ENCODE measurements at regions of chr4 and their contacts with region 1.

Region 1: DNA sequence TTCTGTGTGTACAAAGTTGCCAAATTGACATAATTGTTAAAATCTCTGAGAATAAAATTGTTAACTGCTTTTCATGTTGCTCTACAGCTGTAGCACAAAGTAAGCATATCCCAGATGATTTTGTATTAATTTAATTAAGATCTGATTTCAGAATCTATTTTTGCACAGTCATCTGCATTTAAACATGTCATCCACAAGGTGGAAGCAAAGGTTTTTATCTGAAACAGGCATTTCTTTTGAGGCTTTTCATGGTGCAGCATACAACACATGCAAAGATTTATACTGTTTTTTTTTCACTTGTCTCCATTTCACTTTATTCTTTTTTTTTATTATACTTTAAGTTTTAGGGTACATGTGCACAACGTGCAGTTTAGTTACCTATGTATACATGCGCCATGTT is 51.2 kb downstream of the GC start:
- DNase-seq: no peak
- H3K4me3 Mint-ChIP-seq: no peak overlapping the region
- H3K27ac Mint-ChIP-seq: no peak overlapping the region
- H3K4me1 Mint-ChIP-seq: no peaks in the 10 kb centered on the region
- H3K27me3 Mint-ChIP-seq: peaks cover 9% of the 10 kb centered on the region

Region 2: DNA sequence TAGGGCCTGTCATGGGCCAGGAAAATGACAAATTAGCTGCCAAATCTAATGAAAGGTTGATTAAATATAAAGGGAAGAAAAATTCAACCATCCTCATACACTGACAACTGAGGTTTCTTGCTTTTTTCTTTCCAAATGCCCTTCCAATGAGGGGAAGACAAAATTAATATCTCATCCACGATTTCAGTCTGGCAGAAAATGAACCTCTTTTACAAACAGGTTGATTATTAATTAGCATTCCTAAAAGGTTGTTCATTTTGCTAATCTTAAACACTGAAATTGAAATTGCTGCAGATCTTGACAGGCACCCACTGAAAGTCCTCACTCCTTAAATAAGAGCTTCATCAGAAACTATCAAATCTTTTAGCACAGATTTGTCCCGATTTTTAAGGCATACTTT is 344.6 kb after region 1 on chr4:
- CTCF ChIA-PET with region 1: no interaction called
- intact Hi-C with region 1: no loop called
- DNase-seq: no peak
- H3K4me3 Mint-ChIP-seq: no peak overlapping the region
- H3K27ac Mint-ChIP-seq: no peak overlapping the region
- H3K4me1 Mint-ChIP-seq: no peaks in the 10 kb centered on the region
- H3K27me3 Mint-ChIP-seq: no peaks in the 10 kb centered on the region

Region 3: DNA sequence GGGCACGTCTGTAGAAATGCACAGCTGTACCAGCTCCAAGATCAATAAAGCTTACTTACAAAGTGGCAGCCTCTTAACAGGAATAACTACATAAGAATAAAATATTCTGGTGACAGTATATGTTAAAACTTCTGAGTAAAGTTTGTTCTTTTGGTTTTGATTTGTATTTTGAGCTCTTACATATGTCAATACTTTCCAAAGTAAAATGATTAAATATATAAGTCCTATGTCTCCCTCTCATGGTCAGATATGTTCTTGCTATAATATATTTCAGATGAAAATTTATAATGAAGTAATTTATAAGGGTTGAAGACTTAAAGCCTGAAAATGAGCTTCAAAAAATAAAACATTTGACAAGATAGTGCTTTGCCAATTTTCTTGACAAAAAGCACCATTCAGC is 553.5 kb after region 1 on chr4:
- CTCF ChIA-PET with region 1: no interaction called
- intact Hi-C with region 1: loop called (anchors 5 kb)
- DNase-seq: no peak
- H3K4me3 Mint-ChIP-seq: no peak overlapping the region
- H3K27ac Mint-ChIP-seq: no peak overlapping the region
- H3K4me1 Mint-ChIP-seq: no peaks in the 10 kb centered on the region
- H3K27me3 Mint-ChIP-seq: peaks cover 11% of the 10 kb centered on the region

Measured in activated naive CD4-positive, alpha-beta T cell treated with anti-CD3 and anti-CD28 coated beads for 36 hours (primary cell).